ENCODE measurements at regions of chr1 and their contacts with region 1.

Region 1: DNA sequence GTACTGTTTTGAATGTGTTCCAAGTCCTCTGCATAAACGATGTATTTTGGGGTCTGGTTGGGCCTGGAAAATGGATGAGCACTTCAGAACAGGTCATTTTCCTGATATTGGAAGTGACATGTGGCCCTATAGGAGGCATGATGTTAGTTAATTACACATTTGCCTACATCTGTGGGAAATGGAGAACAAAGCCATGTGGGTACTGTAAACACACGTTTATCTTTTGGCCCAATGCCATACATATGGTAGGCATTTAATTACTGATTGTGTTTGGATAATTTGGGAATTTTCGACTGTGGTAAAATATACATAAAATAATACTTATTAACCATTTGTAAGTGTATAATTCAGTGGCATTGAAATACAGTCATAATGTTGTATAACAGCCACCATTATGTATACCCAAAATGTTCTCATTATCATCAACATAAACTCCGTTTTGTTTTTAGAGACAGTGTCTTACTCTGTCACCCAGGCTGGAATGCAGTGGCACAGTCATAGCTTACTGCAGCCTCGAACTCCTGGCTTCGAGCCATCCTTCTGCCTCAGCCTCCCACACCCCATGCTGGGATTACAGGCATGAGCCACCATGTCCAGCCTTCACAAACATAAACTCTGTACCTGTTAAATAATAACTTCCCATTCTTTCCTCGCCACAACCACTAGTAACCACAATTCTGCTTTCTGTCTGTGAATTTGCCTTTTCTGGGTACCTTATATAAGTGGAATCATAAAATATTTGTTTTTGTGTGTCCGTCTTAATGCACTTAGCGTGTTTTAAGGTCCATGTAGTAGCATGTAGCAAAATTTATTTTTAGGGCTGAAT is 11.9 kb upstream of the RNPEP start:
- DNase-seq: no peak
- H3K4me3 ChIP-seq: no peak overlapping the region
- H3K27ac ChIP-seq: no peak overlapping the region
- H3K4me1 ChIP-seq: peaks cover 5% of the 10 kb centered on the region
- H3K27me3 ChIP-seq: no peaks in the 10 kb centered on the region
- CTCF ChIP-seq: no peak
- EP300 ChIP-seq: no peak
- POLR2A ChIP-seq: no peak

Region 2: GRCh38 chr1:201828820-201829774 is 141.4 kb before region 1 on chr1 and contains the start of gene IPO9:
- intact Hi-C with region 1: loop called in 1 of 4 experiments (anchors 5 kb)
- DNase-seq: peak; percentile 90 to 97 (median 95)
- H3K4me3 ChIP-seq: peak within 1 kb of the TSS; percentile 97
- H3K27ac ChIP-seq: peak within 1 kb of the TSS; percentile 80 to 92
- H3K4me1 ChIP-seq: peaks cover 9% of the 10 kb centered on the region
- H3K27me3 ChIP-seq: no peaks in the 10 kb centered on the region
- CTCF ChIP-seq: peak; percentile 95 to 99 (median 96)
- EP300 ChIP-seq: no peak
- POLR2A ChIP-seq: peak; percentile 73
- total RNA-seq, gene IPO9: 12.9 to 43.8 (median 40.7) TPM

Region 3: DNA sequence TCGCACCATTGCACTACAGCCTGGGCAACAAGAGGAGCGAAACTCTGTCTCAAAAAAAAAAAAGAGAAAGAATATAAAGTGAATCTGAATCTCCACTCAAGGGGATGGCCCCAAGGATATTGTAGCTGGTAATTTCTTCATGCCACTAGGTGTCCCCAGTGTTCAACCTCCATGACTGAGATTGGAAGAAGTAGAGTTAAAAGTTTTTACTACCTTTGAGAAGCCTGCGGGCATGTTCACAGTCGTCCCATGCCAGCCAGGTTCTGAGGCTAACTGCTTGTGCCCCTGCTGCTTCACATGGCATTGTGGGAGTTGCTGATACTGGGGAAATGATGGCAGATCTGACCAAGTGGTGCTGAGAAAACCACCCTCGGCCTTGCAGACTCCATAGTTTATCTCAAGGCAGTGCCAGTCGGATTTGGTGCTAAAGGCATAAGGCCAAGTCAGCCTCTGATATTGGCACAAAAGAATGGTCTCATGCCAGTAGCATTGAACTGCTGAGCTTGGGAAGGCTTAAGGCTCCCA is 92.6 kb before region 1 on chr1:
- intact Hi-C with region 1: loop called in 1 of 4 experiments (anchors 5 kb)
- DNase-seq: peak in 1 of 5 donors; percentile 54
- H3K4me3 ChIP-seq: no peak overlapping the region
- H3K27ac ChIP-seq: peak overlapping the region in 1 of 2 donors; percentile 63
- H3K4me1 ChIP-seq: no peaks in the 10 kb centered on the region
- H3K27me3 ChIP-seq: no peaks in the 10 kb centered on the region
- CTCF ChIP-seq: peak; percentile 50 to 57 (median 56)
- EP300 ChIP-seq: no peak
- POLR2A ChIP-seq: no peak

Region 4: GRCh38 chr1:201888282-201889089 is 82.1 kb before region 1 on chr1 and contains the start of gene SHISA4:
- intact Hi-C with region 1: loop called in 2 of 4 experiments (anchors 5 kb)
- DNase-seq: peak; percentile 57 to 77 (median 64)
- H3K4me3 ChIP-seq: peak within 1 kb of the TSS; percentile 57
- H3K27ac ChIP-seq: peak within 1 kb of the TSS; percentile 0 to 22
- H3K4me1 ChIP-seq: peaks cover 22% of the 10 kb centered on the region
- H3K27me3 ChIP-seq: no peaks in the 10 kb centered on the region
- CTCF ChIP-seq: no peak
- EP300 ChIP-seq: no peak
- POLR2A ChIP-seq: peak; percentile 23
- total RNA-seq, gene SHISA4: 16.8 to 37.9 (median 26.4) TPM

Region 5: GRCh38 chr1:201982623-201983379 is 12.3 kb after region 1 on chr1 and contains the start of gene RNPEP:
- intact Hi-C with region 1: no loop called
- DNase-seq: peak; percentile 67 to 83 (median 78)
- H3K4me3 ChIP-seq: peak within 1 kb of the TSS; percentile 76
- H3K27ac ChIP-seq: peak within 1 kb of the TSS; percentile 76 to 92
- H3K4me1 ChIP-seq: peaks cover 3% of the 10 kb centered on the region
- H3K27me3 ChIP-seq: no peaks in the 10 kb centered on the region
- CTCF ChIP-seq: peak in 1 of 3 donors; percentile 10
- EP300 ChIP-seq: no peak
- POLR2A ChIP-seq: peak; percentile 61
- total RNA-seq, gene RNPEP: 37.5 to 76.2 (median 43.9) TPM

Measured in ovary (tissue), 10 donors.